CD4-positive, alpha-beta memory T cell (primary cell): ENCODE measurements at regions of chr15 and their contacts with region 1.

Region 1: GRCh38 chr15:82197733-82198594 is 64.6 kb downstream of the EFL1 start:
- DNase-seq: peak in 4 of 5 donors; percentile 35 to 45 (median 41)
- H3K4me3 ChIP-seq: no peak overlapping the region
- H3K4me3 Mint-ChIP-seq: no peak overlapping the region
- H3K27ac ChIP-seq: no peak overlapping the region
- H3K27ac Mint-ChIP-seq: peak overlapping the region in 1 of 7 donors; percentile 37
- H3K4me1 ChIP-seq: no peaks in the 10 kb centered on the region
- H3K4me1 Mint-ChIP-seq: peaks cover 0 to 4% (median 3%) of the 10 kb centered on the region in 4 donors
- H3K27me3 ChIP-seq: no peaks in the 10 kb centered on the region
- H3K27me3 Mint-ChIP-seq: no peaks in the 10 kb centered on the region

Region 2: GRCh38 chr15:82108489-82109078 is 89.4 kb before region 1 on chr15:
- CTCF ChIA-PET with region 1: interaction called, 8 read pairs
- POLR2A ChIA-PET with region 1: no interaction called
- intact Hi-C with region 1: loop called (anchors 2 kb)
- DNase-seq: peak; percentile 46 to 58 (median 54)
- H3K4me3 ChIP-seq: no peak overlapping the region
- H3K4me3 Mint-ChIP-seq: no peak overlapping the region
- H3K27ac ChIP-seq: no peak overlapping the region
- H3K27ac Mint-ChIP-seq: peak overlapping the region in 1 of 7 donors; percentile 37
- H3K4me1 ChIP-seq: no peaks in the 10 kb centered on the region
- H3K4me1 Mint-ChIP-seq: no peaks in the 10 kb centered on the region
- H3K27me3 ChIP-seq: no peaks in the 10 kb centered on the region
- H3K27me3 Mint-ChIP-seq: peaks cover 0 to 2% of the 10 kb centered on the region in 2 donors